Activated B cell treated with CpG ODN at 0.5 μM for 24 hours (primary cell): ENCODE measurements at regions of chr16 and their contacts with region 1.

Region 1: DNA sequence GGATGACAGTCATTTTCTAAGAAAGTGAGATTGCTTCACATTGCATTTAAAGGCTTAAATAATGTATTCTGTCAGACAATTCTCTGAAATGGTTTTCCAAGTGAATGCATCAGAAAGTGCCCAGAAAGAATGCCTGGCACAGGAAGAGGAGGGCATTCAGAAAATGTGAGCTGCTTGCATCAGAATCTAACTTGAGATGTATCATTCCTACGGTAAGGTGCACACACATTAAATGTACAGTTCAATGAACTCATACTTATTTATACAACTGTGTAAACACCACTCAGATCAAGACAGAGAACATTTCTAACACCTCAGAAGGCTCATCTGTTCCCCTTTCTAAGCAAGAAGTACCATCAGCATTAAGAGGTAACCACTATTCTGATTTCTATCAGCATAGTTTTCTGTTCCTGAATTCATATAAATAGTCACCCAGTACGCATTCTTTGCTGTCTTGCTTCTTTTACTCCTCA is 638.0 kb downstream of the MAF start:
- DNase-seq: no peak
- ATAC-seq: peak; percentile 84
- H3K4me3 Mint-ChIP-seq: peak overlapping the region; percentile 59
- H3K27ac Mint-ChIP-seq: peak overlapping the region; percentile 79
- H3K4me1 Mint-ChIP-seq: peaks cover 54% of the 10 kb centered on the region
- H3K27me3 Mint-ChIP-seq: peaks cover 8% of the 10 kb centered on the region
- CTCF ChIP-seq: no peak

Region 2: DNA sequence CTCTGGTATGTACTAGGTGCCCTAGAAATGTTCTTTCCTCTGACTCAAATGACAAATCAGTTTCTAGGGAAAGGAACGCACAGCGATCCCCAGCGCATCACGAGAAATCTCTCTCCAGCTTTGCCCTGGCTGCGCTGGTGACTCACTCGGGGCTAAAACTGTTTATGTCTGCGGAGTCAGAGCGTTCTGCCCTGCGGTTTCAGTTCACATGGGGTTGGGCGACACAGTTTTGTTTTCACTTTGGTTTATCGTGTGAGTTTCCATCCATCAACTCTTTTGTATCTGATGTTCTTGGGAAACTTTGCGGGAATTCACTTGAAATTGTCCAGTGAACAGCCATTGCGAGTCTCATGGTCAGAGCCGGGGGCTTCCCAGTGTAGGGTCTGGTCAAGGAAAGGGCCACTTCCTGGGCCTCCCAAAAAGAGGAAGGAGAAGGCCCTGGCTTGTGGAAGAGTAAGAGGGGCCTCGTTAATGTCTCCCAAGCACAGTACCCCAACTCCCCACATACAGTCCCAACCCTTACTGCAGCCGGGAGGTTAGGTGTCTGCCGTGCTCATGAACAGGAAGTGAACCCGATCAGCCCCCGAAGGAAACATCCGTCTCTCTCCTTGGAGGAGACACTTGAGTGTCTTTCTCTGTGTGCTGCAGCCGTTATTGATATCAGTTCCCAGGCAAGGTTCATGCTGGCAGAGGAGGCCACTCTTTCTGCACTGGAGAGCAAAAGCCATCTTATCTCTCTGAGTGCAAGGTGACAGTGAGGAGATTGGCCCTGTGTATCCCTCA is 219.8 kb before region 1 on chr16:
- CTCF ChIA-PET with region 1: no interaction called
- POLR2A ChIA-PET with region 1: no interaction called
- intact Hi-C with region 1: loop called (anchors 10 kb)
- DNase-seq: peak; percentile 36
- ATAC-seq: peak; percentile 92
- H3K4me3 Mint-ChIP-seq: peak overlapping the region; percentile 81
- H3K27ac Mint-ChIP-seq: peak overlapping the region; percentile 91
- H3K4me1 Mint-ChIP-seq: peaks cover 47% of the 10 kb centered on the region
- H3K27me3 Mint-ChIP-seq: no peaks in the 10 kb centered on the region
- CTCF ChIP-seq: no peak

Region 3: DNA sequence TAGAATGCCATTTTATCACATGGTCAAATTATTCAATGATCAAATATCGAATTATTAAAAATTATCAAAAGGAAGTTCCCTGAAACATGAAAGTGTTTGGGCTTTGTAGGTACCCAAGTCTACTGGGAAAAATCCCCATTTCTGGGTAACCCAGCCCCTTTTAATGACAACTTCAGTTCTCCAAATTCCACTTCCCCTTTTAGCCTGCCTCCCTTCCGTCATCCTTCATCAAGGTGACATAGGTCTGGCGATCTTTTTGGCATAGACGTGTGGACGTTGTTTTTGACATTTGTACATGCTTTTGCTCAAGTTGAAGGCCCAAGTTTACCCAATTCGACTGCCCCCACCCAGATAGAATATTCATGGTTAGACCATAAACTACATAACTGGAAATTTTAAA is 22.9 kb before region 1 on chr16:
- CTCF ChIA-PET with region 1: no interaction called
- POLR2A ChIA-PET with region 1: interaction called, 4 read pairs
- intact Hi-C with region 1: loop called (anchors 1 kb)
- DNase-seq: no peak
- ATAC-seq: peak; percentile 61
- H3K4me3 Mint-ChIP-seq: no peak overlapping the region
- H3K27ac Mint-ChIP-seq: no peak overlapping the region
- H3K4me1 Mint-ChIP-seq: peaks cover 34% of the 10 kb centered on the region
- H3K27me3 Mint-ChIP-seq: peaks cover 2% of the 10 kb centered on the region
- CTCF ChIP-seq: no peak

Region 4: GRCh38 chr16:79012731-79013434 is 50.4 kb after region 1 on chr16:
- CTCF ChIA-PET with region 1: no interaction called
- POLR2A ChIA-PET with region 1: interaction called, 14 read pairs
- intact Hi-C with region 1: loop called (anchors 1 kb)
- DNase-seq: peak; percentile 22
- ATAC-seq: peak; percentile 98
- H3K4me3 Mint-ChIP-seq: peak overlapping the region; percentile 47
- H3K27ac Mint-ChIP-seq: peak overlapping the region; percentile 18
- H3K4me1 Mint-ChIP-seq: peaks cover 26% of the 10 kb centered on the region
- H3K27me3 Mint-ChIP-seq: no peaks in the 10 kb centered on the region
- CTCF ChIP-seq: no peak

Region 5: GRCh38 chr16:79089735-79090284 is 127.3 kb after region 1 on chr16:
- CTCF ChIA-PET with region 1: no interaction called
- POLR2A ChIA-PET with region 1: no interaction called
- intact Hi-C with region 1: loop called (anchors 5 kb)
- DNase-seq: no peak
- ATAC-seq: peak; percentile 49
- H3K4me3 Mint-ChIP-seq: peak overlapping the region; percentile 64
- H3K27ac Mint-ChIP-seq: peak overlapping the region; percentile 24
- H3K4me1 Mint-ChIP-seq: peaks cover 44% of the 10 kb centered on the region
- H3K27me3 Mint-ChIP-seq: peaks cover 4% of the 10 kb centered on the region
- CTCF ChIP-seq: no peak